Panc1 (cell line): ENCODE measurements at regions of chr7 and their contacts with region 1.

Region 1: DNA sequence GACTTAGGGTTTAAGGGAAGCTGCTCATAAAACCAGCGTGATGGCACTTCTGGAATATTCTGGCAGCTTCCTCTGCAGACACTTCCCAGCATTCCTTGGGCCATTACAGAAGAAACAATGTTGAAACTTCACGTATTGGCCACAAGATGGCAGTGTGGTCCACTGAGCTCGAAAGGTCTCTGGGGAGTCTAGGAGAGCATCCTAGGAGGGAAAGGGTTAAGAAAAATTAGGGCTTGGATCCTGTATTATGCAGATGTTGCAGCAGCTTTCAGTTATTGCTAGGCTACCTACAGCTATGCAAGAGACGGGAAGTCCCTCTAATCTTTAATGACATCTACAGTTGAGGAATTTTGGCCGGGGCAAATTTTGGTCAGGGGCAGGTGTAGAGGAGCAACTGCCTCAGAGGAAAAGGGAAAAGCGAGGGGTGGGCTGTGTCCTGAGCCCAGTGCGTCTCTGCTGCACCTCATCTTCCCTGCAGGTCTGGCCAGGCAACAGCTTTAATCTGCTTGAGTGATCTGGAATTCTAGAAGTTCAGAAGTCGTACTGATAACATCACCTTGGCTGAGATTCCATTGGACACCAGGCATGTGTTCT is 220.7 kb upstream of the PRSS58 start:
- DNase-seq: no peak
- ATAC-seq: peak; percentile 74; the same call in 1 of the 2 replicates
- H3K4me3 ChIP-seq: no peak overlapping the region
- H3K27ac ChIP-seq: no peak overlapping the region
- H3K4me1 ChIP-seq: no peaks in the 10 kb centered on the region
- H3K27me3 ChIP-seq: peaks cover 3% of the 10 kb centered on the region; the same call in 1 of the 2 replicates
- CTCF ChIP-seq: peak; percentile 78

Region 2: DNA sequence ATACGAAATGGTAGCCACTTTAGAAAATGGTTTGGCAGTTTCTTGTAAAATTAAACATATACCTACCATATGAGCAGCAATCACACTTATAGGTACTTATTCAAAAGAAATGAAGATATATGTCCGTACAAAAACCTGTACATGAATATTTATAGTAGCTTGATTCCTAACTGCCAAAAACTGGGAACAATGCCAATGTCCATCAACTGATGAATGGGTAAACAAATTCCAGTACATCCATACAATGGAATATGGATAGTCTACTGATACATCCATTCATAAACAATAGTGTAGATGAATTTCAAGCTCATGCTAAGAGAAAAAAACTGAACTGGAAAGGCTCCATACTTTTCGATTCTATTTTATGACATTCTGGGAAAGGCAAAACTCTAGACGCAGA is 858.8 kb before region 1 on chr7:
- CTCF ChIA-PET with region 1: interaction called, 10 read pairs
- POLR2A ChIA-PET with region 1: no interaction called
- in situ Hi-C with region 1: no loop called
- intact Hi-C with region 1: no loop called
- DNase-seq: no peak
- ATAC-seq: no peak
- H3K4me3 ChIP-seq: no peak overlapping the region
- H3K27ac ChIP-seq: no peak overlapping the region
- H3K4me1 ChIP-seq: no peaks in the 10 kb centered on the region
- H3K27me3 ChIP-seq: no peaks in the 10 kb centered on the region
- CTCF ChIP-seq: no peak

Region 3: GRCh38 chr7:142516038-142516501 is 37.5 kb after region 1 on chr7:
- CTCF ChIA-PET with region 1: no interaction called
- POLR2A ChIA-PET with region 1: no interaction called
- in situ Hi-C with region 1: no loop called
- intact Hi-C with region 1: no loop called
- DNase-seq: no peak
- ATAC-seq: peak; percentile 94
- H3K4me3 ChIP-seq: no peak overlapping the region
- H3K27ac ChIP-seq: no peak overlapping the region
- H3K4me1 ChIP-seq: no peaks in the 10 kb centered on the region
- H3K27me3 ChIP-seq: peaks cover 4% of the 10 kb centered on the region; the same call in 1 of the 2 replicates
- CTCF ChIP-seq: peak; percentile 86